ENCODE measurements at regions of chr11 and their contacts with region 1.

Region 1: GRCh38 chr11:44627911-44628729 is 62.7 kb downstream of the CD82 start:
- DNase-seq: no peak
- H3K4me3 ChIP-seq: no peak overlapping the region
- H3K27ac ChIP-seq: no peak overlapping the region
- H3K4me1 ChIP-seq: no peaks in the 10 kb centered on the region
- H3K27me3 ChIP-seq: peaks cover 8% of the 10 kb centered on the region
- CTCF ChIP-seq: no peak

Region 2: DNA sequence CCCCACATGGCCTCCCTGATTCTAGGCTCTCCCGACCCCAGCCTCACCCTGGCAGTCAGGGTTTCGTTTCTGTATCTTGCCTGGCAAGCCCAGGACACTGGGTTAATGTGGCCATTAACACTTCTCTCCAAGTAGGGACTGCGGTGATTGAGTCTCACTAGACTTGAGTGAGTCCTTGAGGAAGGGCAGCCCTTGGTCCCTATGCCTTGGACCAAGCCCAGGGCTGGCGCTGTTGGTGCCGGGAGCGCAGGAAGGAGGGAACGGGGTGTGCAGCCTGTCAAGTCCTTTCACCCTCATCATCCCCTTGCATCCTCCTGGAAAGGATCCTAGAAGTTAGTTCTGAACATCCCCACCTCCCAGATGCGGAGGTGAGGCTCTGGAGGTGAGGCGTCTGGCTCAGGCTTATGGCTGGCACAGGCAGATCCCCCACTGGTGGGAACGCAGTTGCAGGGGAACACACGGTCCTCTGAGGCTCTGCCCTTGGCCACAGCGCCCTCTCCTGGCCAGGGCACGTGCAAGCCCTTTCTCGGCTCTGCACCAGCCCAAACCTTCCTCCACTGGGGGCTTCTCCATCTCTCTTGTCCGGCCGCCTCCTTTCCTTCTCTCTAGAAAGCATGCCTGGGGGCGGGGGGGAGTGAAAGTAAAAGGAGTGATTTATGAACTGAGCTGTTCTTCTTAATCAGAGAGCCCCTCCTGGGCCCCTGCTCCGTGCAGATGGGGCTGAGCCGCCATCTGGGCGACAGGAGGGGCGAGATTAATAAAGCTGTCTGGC is 265.9 kb after region 1 on chr11:
- dilution Hi-C with region 1: loop called (anchors 25 kb)
- DNase-seq: no peak
- H3K4me3 ChIP-seq: no peak overlapping the region
- H3K27ac ChIP-seq: no peak overlapping the region
- H3K4me1 ChIP-seq: no peaks in the 10 kb centered on the region
- H3K27me3 ChIP-seq: peaks cover 58% of the 10 kb centered on the region
- CTCF ChIP-seq: peak; percentile 79 to 97 (median 94)